ENCODE measurements at regions of chr4 and their contacts with region 1.

Region 1: GRCh38 chr4:88523325-88524129 is at the start of gene PYURF:
- DNase-seq: peak; percentile 73
- H3K4me3 ChIP-seq: peak within 1 kb of the TSS; percentile 92
- H3K27ac ChIP-seq: peak within 1 kb of the TSS; percentile 66
- H3K27me3 ChIP-seq: no peaks in the 10 kb centered on the region
- CTCF ChIP-seq: no peak
- polyA plus RNA-seq, gene PYURF: 50.5 and 65.7 TPM in 2 replicates

Region 2: GRCh38 chr4:88225232-88226105 is 298.1 kb before region 1 on chr4:
- CTCF ChIA-PET with region 1: interaction called, 363 read pairs
- POLR2A ChIA-PET with region 1: no interaction called
- DNase-seq: no peak
- H3K4me3 ChIP-seq: no peak overlapping the region
- H3K27ac ChIP-seq: no peak overlapping the region
- H3K27me3 ChIP-seq: no peaks in the 10 kb centered on the region
- CTCF ChIP-seq: no peak

Region 3: GRCh38 chr4:88467392-88467791 is 56.1 kb before region 1 on chr4:
- CTCF ChIA-PET with region 1: no interaction called
- POLR2A ChIA-PET with region 1: no interaction called
- DNase-seq: no peak
- H3K4me3 ChIP-seq: no peak overlapping the region
- H3K27ac ChIP-seq: no peak overlapping the region
- H3K27me3 ChIP-seq: no peaks in the 10 kb centered on the region
- CTCF ChIP-seq: no peak

Region 4: DNA sequence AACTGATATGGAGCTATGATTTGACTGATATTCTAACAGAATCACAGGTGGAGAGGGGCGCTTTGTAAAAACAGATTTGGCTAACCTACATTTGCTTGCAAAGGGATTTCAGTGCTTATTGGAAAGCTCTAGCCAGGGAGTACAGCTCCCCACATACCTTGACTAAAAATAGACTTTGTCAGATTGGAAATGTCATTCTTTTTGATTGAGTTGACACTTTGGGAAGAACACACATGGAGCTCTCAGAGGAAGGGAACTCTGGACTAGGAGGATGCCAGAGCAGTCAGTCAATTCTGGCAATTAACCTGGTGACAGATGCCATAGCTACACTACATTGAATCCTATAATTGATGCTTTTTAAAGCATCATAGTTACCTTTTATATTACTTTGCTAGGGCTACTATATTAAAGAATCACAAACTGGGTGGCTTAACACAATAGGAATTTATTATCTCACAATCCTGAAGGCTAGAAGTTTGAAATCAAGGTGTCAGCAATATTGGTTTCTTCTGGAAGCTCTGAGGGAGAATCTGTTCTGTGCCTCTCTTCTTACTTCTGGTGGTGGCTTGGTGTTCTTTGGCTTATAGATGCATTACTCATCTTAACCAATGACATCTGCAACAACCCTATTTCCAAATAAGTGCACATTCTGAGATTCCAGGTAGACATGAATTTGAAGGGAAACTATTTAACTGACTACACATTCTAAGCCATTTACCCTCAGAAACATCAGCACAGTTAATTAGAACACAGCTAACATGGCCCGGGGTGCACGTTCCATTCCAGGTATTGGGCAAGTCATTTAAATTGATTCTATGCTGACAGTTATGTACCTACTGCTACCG is 60.3 kb after region 1 on chr4:
- CTCF ChIA-PET with region 1: no interaction called
- POLR2A ChIA-PET with region 1: no interaction called
- DNase-seq: no peak
- H3K4me3 ChIP-seq: no peak overlapping the region
- H3K27ac ChIP-seq: no peak overlapping the region
- H3K27me3 ChIP-seq: no peaks in the 10 kb centered on the region
- CTCF ChIP-seq: no peak

Measured in AG04450 (cell line).